Panc1 (cell line): ENCODE measurements at regions of chr2 and their contacts with region 1.

Region 1: DNA sequence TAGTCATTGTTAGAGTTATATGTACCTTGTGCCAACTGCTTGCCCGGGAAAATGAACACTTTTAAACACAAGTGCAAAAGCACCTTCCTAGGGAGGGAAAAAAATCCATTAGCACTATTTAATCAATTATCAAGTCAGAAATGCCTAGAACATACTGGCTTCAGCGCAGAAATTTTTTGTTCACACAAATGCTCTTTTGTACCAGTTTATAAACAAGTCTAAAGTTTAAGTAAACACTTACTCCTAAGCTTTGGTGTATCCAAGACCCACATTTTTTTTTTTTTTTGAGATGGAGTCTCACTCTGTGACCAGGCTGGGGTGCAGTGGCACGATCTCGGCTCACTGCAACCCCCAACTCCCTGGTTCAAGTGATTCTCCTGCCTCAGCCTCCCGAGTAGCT is 30.6 kb downstream of the GFPT1 start:
- DNase-seq: no peak
- ATAC-seq: no peak
- H3K4me3 ChIP-seq: no peak overlapping the region
- H3K27ac ChIP-seq: no peak overlapping the region
- H3K4me1 ChIP-seq: no peaks in the 10 kb centered on the region
- H3K27me3 ChIP-seq: no peaks in the 10 kb centered on the region
- CTCF ChIP-seq: no peak

Region 2: GRCh38 chr2:68971591-68972231 is 384.8 kb before region 1 on chr2:
- CTCF ChIA-PET with region 1: no interaction called
- POLR2A ChIA-PET with region 1: no interaction called
- in situ Hi-C with region 1: no loop called
- intact Hi-C with region 1: no loop called
- DNase-seq: no peak
- ATAC-seq: peak; percentile 91
- H3K4me3 ChIP-seq: no peak overlapping the region
- H3K27ac ChIP-seq: peak overlapping the region; percentile 29; the same call in 1 of the 2 replicates
- H3K4me1 ChIP-seq: peaks cover 10% of the 10 kb centered on the region
- H3K27me3 ChIP-seq: no peaks in the 10 kb centered on the region
- CTCF ChIP-seq: no peak

Region 3: DNA sequence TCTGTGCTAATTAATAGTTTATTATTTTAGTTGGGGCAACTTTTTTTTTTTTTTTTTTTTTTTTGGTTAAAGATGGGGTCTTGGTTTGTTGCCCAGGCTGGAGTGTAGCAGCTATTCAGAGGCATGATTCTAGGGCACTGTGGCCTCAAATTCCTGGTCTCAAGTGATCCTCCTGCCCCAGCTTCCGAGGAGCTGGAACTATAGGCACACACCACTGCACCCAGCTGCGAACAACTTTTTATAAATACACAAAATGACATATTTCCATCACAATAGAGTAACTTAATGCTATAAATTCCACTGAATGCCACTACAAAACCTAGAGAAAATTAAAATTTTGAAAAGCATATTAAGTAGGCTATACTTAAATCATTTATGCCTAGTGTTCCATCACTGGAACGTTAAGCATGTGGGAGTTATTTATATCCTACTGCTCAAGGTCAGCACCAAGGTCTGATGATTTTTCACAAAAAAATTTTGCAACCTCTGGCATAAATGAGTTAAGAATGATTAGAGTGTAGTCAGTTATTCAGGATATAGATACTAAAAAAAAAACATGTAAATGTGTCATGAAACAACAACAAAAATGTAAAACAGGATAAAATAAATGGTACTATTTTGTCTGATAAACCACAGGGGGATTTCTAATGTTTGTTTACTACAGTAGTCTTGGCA is 16.2 kb before region 1 on chr2:
- CTCF ChIA-PET with region 1: no interaction called
- POLR2A ChIA-PET with region 1: interaction called, 10 read pairs
- in situ Hi-C with region 1: no loop called
- intact Hi-C with region 1: no loop called
- DNase-seq: no peak
- ATAC-seq: no peak
- H3K4me3 ChIP-seq: no peak overlapping the region
- H3K27ac ChIP-seq: no peak overlapping the region
- H3K4me1 ChIP-seq: no peaks in the 10 kb centered on the region
- H3K27me3 ChIP-seq: no peaks in the 10 kb centered on the region
- CTCF ChIP-seq: no peak